ENCODE measurements at regions of chr12 and their contacts with region 1.

Region 1: DNA sequence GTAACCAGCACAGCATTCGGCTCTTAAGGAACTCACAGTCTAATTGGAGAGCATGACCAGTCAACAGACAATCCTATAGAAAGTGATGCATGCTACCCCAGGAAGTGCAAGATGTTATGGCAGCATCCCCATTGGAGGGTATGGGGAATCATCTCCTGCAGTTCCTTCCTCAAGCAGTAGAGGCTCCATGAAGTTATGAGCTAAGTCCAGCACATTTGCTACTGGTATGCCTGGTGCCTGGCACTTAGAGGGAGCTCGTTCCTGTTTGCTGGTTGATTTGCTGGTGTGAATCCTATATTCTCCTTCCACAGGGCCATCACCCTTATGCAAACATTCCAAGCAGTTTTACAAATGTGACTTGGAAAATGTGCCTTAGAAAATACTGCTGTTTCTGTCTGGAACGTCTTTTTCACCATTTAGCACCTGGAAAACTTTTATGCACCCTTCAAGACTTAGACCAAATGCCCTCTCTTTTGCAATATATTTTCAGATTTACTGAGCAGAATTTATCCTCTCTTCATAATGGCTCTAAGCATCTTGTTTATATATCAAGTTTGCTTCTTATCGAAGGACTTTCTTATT is 136.1 kb upstream of the WSCD2 start:
- DNase-seq: peak; percentile 46
- H3K4me3 ChIP-seq: no peak overlapping the region
- H3K27ac ChIP-seq: no peak overlapping the region
- H3K4me1 ChIP-seq: no peaks in the 10 kb centered on the region; a peak in 1 of 4 replicates
- H3K27me3 ChIP-seq: no peaks in the 10 kb centered on the region
- CTCF ChIP-seq: peak; percentile 24
- EP300 ChIP-seq: no peak
- RAD21 ChIP-seq: peak; percentile 68

Region 2: GRCh38 chr12:107955966-107956643 is 36.9 kb before region 1 on chr12:
- CTCF ChIA-PET with region 1: no interaction called
- POLR2A ChIA-PET with region 1: no interaction called
- DNase-seq: no peak
- H3K4me3 ChIP-seq: no peak overlapping the region
- H3K27ac ChIP-seq: no peak overlapping the region
- H3K4me1 ChIP-seq: no peaks in the 10 kb centered on the region
- H3K27me3 ChIP-seq: no peaks in the 10 kb centered on the region
- CTCF ChIP-seq: no peak
- EP300 ChIP-seq: no peak
- RAD21 ChIP-seq: no peak

Region 3: GRCh38 chr12:107978201-107978600 is 14.8 kb before region 1 on chr12:
- CTCF ChIA-PET with region 1: interaction called, 37 read pairs
- POLR2A ChIA-PET with region 1: no interaction called
- DNase-seq: no peak
- H3K4me3 ChIP-seq: no peak overlapping the region
- H3K27ac ChIP-seq: no peak overlapping the region
- H3K4me1 ChIP-seq: peaks cover 0 to 2% of the 10 kb centered on the region in 2 experiments; a peak in 1 of 4 replicates
- H3K27me3 ChIP-seq: no peaks in the 10 kb centered on the region
- CTCF ChIP-seq: no peak
- EP300 ChIP-seq: no peak
- RAD21 ChIP-seq: no peak

Region 4: DNA sequence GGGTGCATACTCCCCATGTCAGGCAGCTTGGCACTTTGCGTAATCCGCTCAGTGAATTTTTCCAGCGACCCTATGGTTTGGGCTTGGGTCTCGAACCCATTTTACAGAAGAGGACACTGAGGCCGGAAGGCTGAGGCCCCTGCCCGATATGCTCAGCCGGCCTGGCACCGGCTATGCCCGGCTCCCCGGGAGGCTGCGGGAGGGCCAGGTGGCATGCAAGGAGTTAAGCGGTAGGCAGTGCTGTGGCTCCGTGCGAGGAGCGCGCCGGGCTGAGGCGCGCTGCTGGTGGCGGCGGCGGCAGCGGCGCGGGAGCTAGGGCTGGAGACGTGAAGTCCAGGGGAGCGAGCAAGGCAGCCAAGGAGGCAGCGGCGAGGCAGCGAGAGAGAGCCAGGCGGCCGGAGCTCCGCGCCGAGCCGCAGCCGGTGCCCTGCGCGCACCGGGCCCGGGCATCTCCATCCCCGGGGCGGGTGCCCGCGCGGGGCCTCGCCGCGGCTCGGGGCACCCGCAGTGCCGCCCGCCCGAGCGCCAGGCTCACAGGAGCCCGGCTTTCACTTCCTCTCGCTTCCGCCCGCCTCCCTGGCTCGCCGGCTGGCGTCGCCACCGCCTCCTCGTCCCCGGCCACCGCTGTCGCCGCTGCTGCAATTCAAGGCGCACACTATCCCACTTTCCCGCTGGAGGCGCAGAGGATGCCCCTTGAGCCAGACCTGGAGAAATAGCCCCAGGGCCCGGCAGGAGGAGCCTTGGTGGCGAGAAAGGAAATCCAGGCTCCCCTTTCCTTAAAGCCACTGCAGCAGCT is 136.3 kb after region 1 on chr12 and contains the start of gene WSCD2:
- CTCF ChIA-PET with region 1: interaction called, 10 read pairs
- POLR2A ChIA-PET with region 1: no interaction called
- DNase-seq: peak; percentile 90
- H3K4me3 ChIP-seq: peak within 1 kb of the TSS in 1 of 2 experiments; percentile 48; a peak in 3 of 4 replicates
- H3K27ac ChIP-seq: peak within 1 kb of the TSS in 1 of 2 experiments; percentile 69; a peak in 2 of 4 replicates
- H3K4me1 ChIP-seq: peaks cover 0 to 26% of the 10 kb centered on the region in 2 experiments; a peak in 1 of 4 replicates
- H3K27me3 ChIP-seq: no peaks in the 10 kb centered on the region
- CTCF ChIP-seq: no peak
- EP300 ChIP-seq: no peak
- RAD21 ChIP-seq: peak; percentile 53
- polyA plus RNA-seq, gene WSCD2: 0.03 and 0.05 TPM in 2 replicates

Region 5: DNA sequence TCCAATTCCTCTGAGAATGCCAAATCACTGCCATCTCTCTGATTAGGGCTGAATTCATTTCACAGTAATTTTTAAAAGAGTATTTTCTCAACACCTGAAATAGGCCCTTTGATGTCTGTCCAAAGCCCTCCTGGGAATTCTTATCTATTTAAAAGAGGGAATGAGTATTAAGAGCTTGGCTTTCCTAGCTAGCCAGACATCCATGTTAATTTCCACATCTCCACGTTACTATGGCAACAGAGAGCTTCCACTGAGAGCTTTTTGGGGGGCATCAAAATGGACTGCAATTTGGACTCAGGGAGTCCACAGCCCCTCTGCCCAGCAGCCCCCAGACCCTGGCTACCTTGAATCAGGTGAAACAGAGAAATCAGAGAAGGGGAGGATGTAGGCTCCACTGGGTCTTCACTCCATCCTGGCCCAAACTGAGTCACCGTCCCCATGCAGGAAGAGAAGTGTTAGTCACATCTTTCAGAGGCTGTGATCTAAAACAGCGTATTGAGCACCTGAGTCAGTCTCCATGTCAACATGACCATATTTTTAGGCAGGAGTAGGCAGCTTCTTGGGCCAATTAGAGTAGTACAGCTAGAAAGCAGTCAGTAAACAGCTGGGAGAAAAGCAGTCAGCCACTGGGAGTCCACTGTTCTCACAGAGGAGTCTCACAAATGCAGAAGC is 515.1 kb after region 1 on chr12:
- CTCF ChIA-PET with region 1: interaction called, 106 read pairs
- POLR2A ChIA-PET with region 1: no interaction called
- DNase-seq: no peak
- H3K4me3 ChIP-seq: no peak overlapping the region
- H3K27ac ChIP-seq: no peak overlapping the region; a peak in 2 of 4 replicates
- H3K4me1 ChIP-seq: peaks cover 0 to 10% of the 10 kb centered on the region in 2 experiments; a peak in 1 of 4 replicates
- H3K27me3 ChIP-seq: no peaks in the 10 kb centered on the region
- CTCF ChIP-seq: no peak
- EP300 ChIP-seq: no peak
- RAD21 ChIP-seq: no peak

Region 6: DNA sequence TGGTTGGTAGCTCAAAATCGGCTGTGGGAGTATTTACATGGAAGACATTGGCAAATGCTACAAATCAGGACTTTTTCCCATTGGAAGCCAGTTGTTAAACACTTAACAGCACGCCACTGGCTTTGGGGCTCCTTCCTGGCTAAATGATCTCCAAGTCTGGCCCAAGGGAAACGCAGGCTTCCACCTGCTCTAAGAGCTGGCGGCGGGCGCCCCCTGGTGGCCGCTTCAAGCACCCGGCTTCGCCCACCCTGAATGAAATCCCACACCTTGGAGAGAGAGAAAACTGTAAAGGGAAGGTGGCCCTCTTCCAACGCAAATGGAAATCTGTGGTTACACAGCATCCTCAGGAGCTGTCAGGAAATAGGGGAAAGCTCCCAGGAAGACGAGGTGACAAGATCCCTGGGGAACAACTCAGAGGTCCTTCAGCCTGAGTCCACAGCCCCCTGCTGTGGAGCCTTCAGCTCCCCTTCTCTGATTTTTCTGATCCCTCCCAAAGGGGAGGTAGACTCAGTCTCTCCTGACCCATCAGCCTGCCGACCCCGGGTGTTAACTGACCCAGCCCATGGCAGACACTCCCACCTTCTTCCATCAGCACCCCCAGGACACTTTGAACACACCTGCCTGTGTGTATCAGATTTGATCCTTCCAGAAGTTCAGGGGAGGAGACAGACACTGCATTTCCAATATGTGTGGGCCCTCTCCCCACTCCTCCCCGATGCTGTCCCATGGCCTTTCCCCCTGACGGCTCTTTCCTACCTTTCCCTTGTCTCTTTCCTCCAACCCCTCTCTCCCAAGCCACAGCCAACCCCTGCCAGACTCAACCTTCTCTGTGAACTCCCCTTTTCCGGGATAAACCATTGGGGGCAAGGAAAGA is 625.4 kb after region 1 on chr12:
- CTCF ChIA-PET with region 1: interaction called, 11 read pairs
- POLR2A ChIA-PET with region 1: no interaction called
- DNase-seq: peak; percentile 86
- H3K4me3 ChIP-seq: peak overlapping the region in 1 of 2 experiments; percentile 30; a peak in 1 of 4 replicates
- H3K27ac ChIP-seq: no peak overlapping the region
- H3K4me1 ChIP-seq: no peaks in the 10 kb centered on the region; a peak in 2 of 4 replicates
- H3K27me3 ChIP-seq: no peaks in the 10 kb centered on the region
- CTCF ChIP-seq: peak; percentile 98
- EP300 ChIP-seq: no peak
- RAD21 ChIP-seq: peak; percentile 99

Measured in SK-N-SH (cell line).